H1 (cell line): ENCODE measurements at regions of chr9 and their contacts with region 1.

Region 1: DNA sequence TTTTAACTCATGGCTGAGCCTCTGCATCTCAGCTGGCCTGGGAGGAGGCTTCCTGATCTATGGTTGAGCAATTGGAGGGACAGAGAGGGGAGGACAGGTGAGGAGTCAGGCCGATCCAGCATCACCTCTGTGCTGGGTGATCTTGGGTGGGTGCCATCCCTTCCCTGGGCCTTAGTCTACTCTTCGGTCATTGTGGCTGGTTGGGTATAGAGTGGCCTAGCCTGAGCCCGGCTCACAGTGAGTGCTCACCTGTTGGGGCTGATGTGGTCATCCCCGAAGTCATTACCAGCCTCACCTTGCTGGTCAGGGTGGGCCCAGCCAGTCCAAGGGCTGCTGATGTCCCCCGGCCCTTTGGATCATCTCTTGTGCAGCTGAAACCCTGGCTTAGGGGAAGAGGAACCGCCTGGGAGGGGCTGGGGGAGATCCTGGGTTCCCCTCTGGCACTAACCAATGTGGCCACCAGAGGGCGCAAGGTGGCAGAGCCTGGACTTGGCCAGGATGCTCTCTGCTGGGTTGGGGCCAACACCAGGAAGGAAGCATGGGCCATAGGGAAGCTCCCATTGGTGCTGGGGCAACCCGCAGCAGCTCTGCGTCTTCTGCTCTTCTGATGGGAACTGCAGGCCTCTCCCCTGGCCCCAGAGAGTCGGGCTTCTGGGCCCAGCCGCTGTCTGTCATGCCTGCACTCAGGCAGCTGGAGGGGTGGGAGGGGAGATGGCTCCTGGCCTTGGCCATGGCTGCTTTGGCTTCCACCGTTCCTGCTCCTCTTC is 17.3 kb upstream of the ODF2 start:
- DNase-seq: peak; percentile 79 to 99
- H3K4me3 ChIP-seq: no peak overlapping the region
- H3K27ac ChIP-seq: no peak overlapping the region
- H3K4me1 ChIP-seq: peaks cover 0 to 3% (median 0%) of the 10 kb centered on the region in 4 experiments; a peak in 1 of 7 replicates
- H3K27me3 ChIP-seq: no peaks in the 10 kb centered on the region; a peak in 1 of 7 replicates
- CTCF ChIP-seq: peak; percentile 90 to 99 (median 95)
- EP300 ChIP-seq: no peak
- POLR2A ChIP-seq: no peak
- RAD21 ChIP-seq: peak; percentile 79 to 91

Region 2: DNA sequence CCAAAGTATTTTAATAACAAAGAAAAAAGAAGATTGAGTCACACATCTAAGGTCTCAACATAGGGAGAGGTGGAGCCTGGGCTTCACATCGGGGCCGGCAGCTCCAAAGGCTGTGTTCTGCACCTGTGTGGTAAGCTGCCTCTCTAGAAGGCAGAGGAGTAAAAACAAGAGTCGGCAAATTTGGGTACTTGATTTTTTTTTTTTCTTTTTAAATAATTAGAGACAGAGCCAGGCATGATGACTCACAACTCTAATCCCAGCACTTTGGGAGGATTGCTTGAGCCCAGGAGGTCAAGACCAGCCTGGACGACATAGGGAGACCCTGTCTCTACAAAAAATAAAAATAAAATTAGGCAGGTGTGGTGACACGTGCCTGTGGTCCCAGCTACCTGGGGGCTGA is 62.7 kb before region 1 on chr9:
- CTCF ChIA-PET with region 1: no interaction called
- POLR2A ChIA-PET with region 1: no interaction called
- DNase-seq: no peak
- H3K4me3 ChIP-seq: no peak overlapping the region
- H3K27ac ChIP-seq: no peak overlapping the region
- H3K4me1 ChIP-seq: peaks cover 0 to 8% (median 2%) of the 10 kb centered on the region in 4 experiments; a peak in 4 of 7 replicates
- H3K27me3 ChIP-seq: peaks cover 0 to 3% (median under 1%) of the 10 kb centered on the region in 4 experiments; a peak in 4 of 7 replicates
- CTCF ChIP-seq: no peak
- EP300 ChIP-seq: no peak
- POLR2A ChIP-seq: no peak
- RAD21 ChIP-seq: no peak

Region 3: GRCh38 chr9:128420060-128420650 is 18.4 kb before region 1 on chr9:
- CTCF ChIA-PET with region 1: interaction called, 25 read pairs
- POLR2A ChIA-PET with region 1: interaction called, 5 read pairs
- DNase-seq: peak in 1 of 2 experiments; percentile 83
- H3K4me3 ChIP-seq: peak overlapping the region; percentile 47 to 89 (median 60)
- H3K27ac ChIP-seq: no peak overlapping the region
- H3K4me1 ChIP-seq: peaks cover 6 to 18% (median 8%) of the 10 kb centered on the region in 4 experiments; a peak in 6 of 7 replicates
- H3K27me3 ChIP-seq: peaks cover 5 to 48% (median 34%) of the 10 kb centered on the region in 4 experiments; a peak in 6 of 7 replicates
- CTCF ChIP-seq: peak in 2 of 3 experiments; percentile 51 to 63; a peak in 3 of 4 replicates
- EP300 ChIP-seq: no peak
- POLR2A ChIP-seq: no peak
- RAD21 ChIP-seq: peak; percentile 20 to 40; a peak in 3 of 4 replicates

Region 4: GRCh38 chr9:128448746-128449145 is 10.2 kb after region 1 on chr9:
- CTCF ChIA-PET with region 1: interaction called, 26 read pairs
- POLR2A ChIA-PET with region 1: interaction called, 3 read pairs
- DNase-seq: no peak
- H3K4me3 ChIP-seq: no peak overlapping the region
- H3K27ac ChIP-seq: no peak overlapping the region
- H3K4me1 ChIP-seq: no peaks in the 10 kb centered on the region
- H3K27me3 ChIP-seq: peaks cover 0 to 6% (median 4%) of the 10 kb centered on the region in 4 experiments; a peak in 4 of 7 replicates
- CTCF ChIP-seq: no peak
- EP300 ChIP-seq: no peak
- POLR2A ChIP-seq: no peak
- RAD21 ChIP-seq: no peak

Region 5: DNA sequence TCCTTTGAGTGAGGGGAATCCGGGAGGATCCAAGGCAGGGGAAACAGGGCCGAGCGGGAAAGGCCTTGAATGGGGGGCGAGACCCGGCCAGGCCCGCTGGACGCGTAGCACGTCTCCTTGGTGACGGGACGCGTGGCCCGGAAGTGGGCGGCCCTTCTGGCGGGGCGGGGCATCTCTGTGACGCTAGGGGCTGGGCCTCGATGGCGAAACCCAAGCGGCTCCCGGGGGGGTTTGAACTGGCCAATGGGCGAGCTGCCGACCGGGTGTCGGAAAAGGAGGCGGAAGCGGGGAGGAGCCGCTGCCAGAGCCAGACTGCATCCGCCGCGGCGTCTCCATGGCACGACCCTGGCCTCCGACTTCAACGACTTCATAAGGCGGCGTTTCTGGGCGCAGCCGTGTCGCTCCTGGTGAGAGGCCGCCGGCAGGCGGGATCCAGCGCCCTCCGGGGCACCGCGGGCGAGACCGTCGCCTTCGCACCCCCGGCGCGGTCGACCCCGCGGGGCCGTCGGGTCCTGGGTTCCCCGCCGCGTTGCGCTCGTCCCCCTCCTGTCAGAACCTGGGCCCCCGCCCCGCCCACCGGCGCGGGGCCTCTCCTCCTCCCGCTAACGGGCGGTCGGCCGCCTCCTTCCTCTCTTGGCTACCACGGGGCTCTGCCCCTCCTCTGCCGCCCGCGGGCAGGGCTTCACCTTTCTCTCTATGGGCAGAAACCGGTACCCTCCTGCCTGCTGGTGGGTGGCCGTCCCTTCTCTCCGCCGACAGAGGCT is 17.5 kb after region 1 on chr9 and contains the start of gene ODF2:
- CTCF ChIA-PET with region 1: interaction called, 26 read pairs
- POLR2A ChIA-PET with region 1: interaction called, 3 read pairs
- DNase-seq: peak; percentile 82 to 99
- H3K4me3 ChIP-seq: peak within 1 kb of the TSS; percentile 57 to 74 (median 70)
- H3K27ac ChIP-seq: no peak within 1 kb of the TSS
- H3K4me1 ChIP-seq: peaks cover 0 to 8% (median 5%) of the 10 kb centered on the region in 4 experiments; a peak in 5 of 7 replicates
- H3K27me3 ChIP-seq: peaks cover 18 to 50% (median 43%) of the 10 kb centered on the region in 4 experiments
- CTCF ChIP-seq: no peak
- EP300 ChIP-seq: no peak
- POLR2A ChIP-seq: peak in 1 of 2 experiments; percentile 57; a peak in 1 of 3 replicates
- RAD21 ChIP-seq: no peak
- total RNA-seq, gene ODF2: 17.9 and 19.9 TPM in 2 replicates

Region 6: GRCh38 chr9:128702445-128702948 is 264.0 kb after region 1 on chr9 and contains the start of gene PKN3:
- CTCF ChIA-PET with region 1: no interaction called
- POLR2A ChIA-PET with region 1: no interaction called
- DNase-seq: peak; percentile 61 to 99
- H3K4me3 ChIP-seq: peak within 1 kb of the TSS; percentile 51 to 75 (median 65)
- H3K27ac ChIP-seq: no peak within 1 kb of the TSS; the same call in 1 of the 2 replicates
- H3K4me1 ChIP-seq: peaks cover 0 to 4% (median 2%) of the 10 kb centered on the region in 4 experiments; a peak in 3 of 7 replicates
- H3K27me3 ChIP-seq: no peaks in the 10 kb centered on the region
- CTCF ChIP-seq: peak; percentile 72 to 87 (median 86)
- EP300 ChIP-seq: 0 out of 3 replicates have a peak, but pooled peaks of 1 of the 2 experiments have one; percentile 20
- POLR2A ChIP-seq: no peak; a peak in 1 of 3 replicates
- RAD21 ChIP-seq: peak; percentile 34 to 46; a peak in 3 of 4 replicates
- total RNA-seq, gene PKN3: 15.2 and 16.3 TPM in 2 replicates

Region 7: GRCh38 chr9:128881901-128882681 is 443.6 kb after region 1 on chr9 and contains the starts of genes KYAT1 and LRRC8A:
- CTCF ChIA-PET with region 1: no interaction called
- POLR2A ChIA-PET with region 1: no interaction called
- DNase-seq: peak; percentile 87 to 98
- H3K4me3 ChIP-seq: peak within 1 kb of the TSS; percentile 82 to 99 (median 96)
- H3K27ac ChIP-seq: peak within 1 kb of the TSS; percentile 84
- H3K4me1 ChIP-seq: peaks cover 3 to 19% (median 7%) of the 10 kb centered on the region in 4 experiments; a peak in 6 of 7 replicates
- H3K27me3 ChIP-seq: no peaks in the 10 kb centered on the region
- CTCF ChIP-seq: no peak
- EP300 ChIP-seq: peak in 1 of 2 experiments; percentile 54; a peak in 1 of 3 replicates
- POLR2A ChIP-seq: peak; percentile 79 to 91
- RAD21 ChIP-seq: peak in 1 of 2 experiments; percentile 0; a peak in 1 of 4 replicates
- total RNA-seq, gene KYAT1: 28.5 and 30.4 TPM in 2 replicates
- total RNA-seq, gene LRRC8A: 103 and 106 TPM in 2 replicates